PC-9 (cell line): ENCODE measurements at regions of chr1 and their contacts with region 1.

Region 1: DNA sequence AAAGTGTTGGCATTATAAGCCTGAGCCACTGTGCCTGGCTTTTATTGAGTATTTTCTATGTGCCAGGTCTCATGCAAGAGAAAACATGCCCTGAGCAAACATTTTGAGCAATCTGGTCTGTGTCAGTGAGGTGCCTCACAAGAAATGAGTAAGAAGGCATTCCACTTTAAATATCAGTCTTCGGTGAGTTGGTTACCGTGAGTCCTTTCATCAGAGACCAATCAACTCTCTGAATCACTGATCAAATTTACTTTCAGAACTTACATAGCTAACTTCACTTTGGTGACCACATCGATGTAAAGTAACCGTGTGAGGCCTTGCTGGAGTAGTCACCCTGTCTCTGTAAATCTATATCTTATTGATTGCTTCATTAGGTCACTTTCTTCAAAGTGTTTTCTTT is 14.3 kb upstream of the DDX59 start:
- DNase-seq: peak in 1 of 2 experiments; percentile 45
- H3K4me3 ChIP-seq: no peak overlapping the region
- H3K27ac ChIP-seq: no peak overlapping the region
- H3K4me1 ChIP-seq: no peaks in the 10 kb centered on the region
- H3K27me3 ChIP-seq: no peaks in the 10 kb centered on the region
- CTCF ChIP-seq: no peak

Region 2: DNA sequence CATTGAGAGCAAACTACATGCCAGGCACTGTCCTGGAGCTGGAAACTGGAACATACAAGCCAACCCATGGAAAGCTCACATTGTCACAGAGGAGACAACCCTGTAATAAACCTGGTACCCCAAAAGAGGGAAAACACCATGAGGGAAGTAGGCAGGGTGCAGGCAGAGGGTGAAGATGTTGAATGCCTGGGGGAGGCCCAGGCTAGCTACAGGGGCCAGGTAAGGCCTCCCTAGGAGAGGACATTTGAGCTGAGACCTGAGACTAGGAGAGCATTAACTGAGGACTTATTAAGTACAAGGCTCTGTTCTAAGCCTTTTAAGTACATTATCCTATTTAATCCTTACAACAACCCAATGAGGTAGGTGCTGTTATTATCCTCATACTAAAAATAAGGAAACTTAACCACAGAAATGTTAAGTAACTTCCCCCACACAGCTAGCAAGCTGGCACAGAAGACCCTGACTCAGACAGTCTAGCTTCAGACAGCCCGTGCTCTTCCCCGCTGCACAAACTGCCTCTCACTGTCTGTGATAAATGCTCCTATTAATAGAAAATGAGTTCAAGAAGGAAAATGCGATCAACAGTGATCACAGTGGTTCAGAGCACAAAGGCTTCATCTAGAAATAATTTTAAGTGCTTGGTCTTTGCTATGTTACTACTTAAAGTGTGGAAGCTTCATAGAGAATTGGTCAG is 316.0 kb before region 1 on chr1:
- CTCF ChIA-PET with region 1: no interaction called
- POLR2A ChIA-PET with region 1: interaction called, 10 read pairs
- intact Hi-C with region 1: no loop called
- DNase-seq: no peak
- H3K4me3 ChIP-seq: no peak overlapping the region
- H3K27ac ChIP-seq: no peak overlapping the region
- H3K4me1 ChIP-seq: peaks cover 60% of the 10 kb centered on the region
- H3K27me3 ChIP-seq: no peaks in the 10 kb centered on the region
- CTCF ChIP-seq: no peak

Region 3: DNA sequence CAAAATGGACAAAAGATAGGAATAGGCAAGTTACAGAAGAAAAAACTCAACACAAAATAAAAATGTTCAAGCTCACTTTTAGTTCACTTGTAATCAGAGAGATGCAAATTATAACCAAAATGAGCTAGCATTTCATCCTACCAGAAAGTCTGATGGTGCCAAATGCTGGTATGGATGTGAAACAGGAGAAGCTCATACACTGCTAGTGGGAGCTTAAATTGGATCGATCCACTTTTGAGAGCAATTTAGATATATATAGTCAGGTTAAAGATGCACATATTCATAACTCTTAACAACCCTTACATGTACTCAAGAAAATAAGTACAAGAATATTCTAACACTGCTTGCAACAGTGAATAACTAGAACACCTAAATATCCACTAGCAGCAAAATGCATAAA is 36.2 kb after region 1 on chr1:
- CTCF ChIA-PET with region 1: no interaction called
- POLR2A ChIA-PET with region 1: no interaction called
- intact Hi-C with region 1: loop called (anchors 1 kb)
- DNase-seq: no peak
- H3K4me3 ChIP-seq: no peak overlapping the region
- H3K27ac ChIP-seq: no peak overlapping the region
- H3K4me1 ChIP-seq: no peaks in the 10 kb centered on the region
- H3K27me3 ChIP-seq: no peaks in the 10 kb centered on the region
- CTCF ChIP-seq: no peak

Region 4: DNA sequence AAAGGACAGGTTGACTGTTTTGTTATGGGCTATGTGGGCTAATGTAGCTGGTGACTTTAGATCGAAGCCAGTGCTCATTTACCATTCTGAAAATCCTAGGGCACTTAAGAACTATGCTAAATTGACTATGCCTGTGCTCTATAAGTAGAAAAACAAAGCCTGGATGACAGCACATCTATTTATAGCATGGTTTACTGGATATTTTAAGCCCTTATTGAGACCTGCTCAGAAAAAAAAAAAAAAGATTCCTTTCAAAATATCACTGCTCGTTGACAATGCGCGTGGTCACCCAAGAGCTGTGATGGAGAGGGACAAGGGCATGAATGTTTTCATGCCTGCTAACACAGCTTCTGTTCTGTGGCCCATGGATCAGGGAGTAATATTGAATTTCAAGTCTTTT is 102.8 kb after region 1 on chr1:
- CTCF ChIA-PET with region 1: no interaction called
- POLR2A ChIA-PET with region 1: no interaction called
- intact Hi-C with region 1: no loop called
- DNase-seq: no peak
- H3K4me3 ChIP-seq: no peak overlapping the region
- H3K27ac ChIP-seq: no peak overlapping the region
- H3K4me1 ChIP-seq: no peaks in the 10 kb centered on the region
- H3K27me3 ChIP-seq: no peaks in the 10 kb centered on the region
- CTCF ChIP-seq: no peak